ENCODE measurements at regions of chr17 and their contacts with region 1.

Region 1: GRCh38 chr17:78019367-78019975 is 61.0 kb downstream of the TNRC6C start:
- DNase-seq: peak; percentile 46
- H3K4me3 Mint-ChIP-seq: no peak overlapping the region
- H3K27ac Mint-ChIP-seq: no peak overlapping the region
- H3K4me1 Mint-ChIP-seq: peaks cover 5% of the 10 kb centered on the region
- H3K27me3 Mint-ChIP-seq: no peaks in the 10 kb centered on the region
- CTCF ChIP-seq: peak; percentile 32

Region 2: GRCh38 chr17:78040440-78041385 is 21.2 kb after region 1 on chr17:
- CTCF ChIA-PET with region 1: interaction called, 8 read pairs
- POLR2A ChIA-PET with region 1: interaction called, 18 read pairs
- intact Hi-C with region 1: no loop called
- DNase-seq: peak; percentile 77
- H3K4me3 Mint-ChIP-seq: peak overlapping the region; percentile 80
- H3K27ac Mint-ChIP-seq: peak overlapping the region; percentile 97
- H3K4me1 Mint-ChIP-seq: peaks cover 19% of the 10 kb centered on the region
- H3K27me3 Mint-ChIP-seq: no peaks in the 10 kb centered on the region
- CTCF ChIP-seq: no peak

Region 3: DNA sequence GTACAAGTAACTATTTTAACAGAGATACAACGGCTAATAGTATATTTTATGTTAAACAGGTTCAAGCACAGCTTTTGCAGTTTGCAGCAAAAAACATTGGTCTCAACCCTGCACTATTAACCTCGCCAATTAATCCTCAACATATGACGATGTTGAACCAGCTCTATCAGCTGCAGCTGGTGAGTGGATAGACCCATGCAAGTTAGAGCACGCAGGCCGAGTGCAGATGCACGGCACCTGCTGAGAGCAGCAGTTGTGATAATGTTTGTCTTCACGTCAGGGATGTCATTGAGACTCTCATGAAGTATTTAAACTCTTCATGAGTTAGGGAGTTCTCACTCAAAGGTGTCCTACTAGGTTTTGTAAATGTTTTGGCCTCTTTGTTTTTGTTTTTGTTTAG is 63.5 kb after region 1 on chr17:
- CTCF ChIA-PET with region 1: interaction called, 4 read pairs
- POLR2A ChIA-PET with region 1: no interaction called
- intact Hi-C with region 1: loop called (anchors 2 kb)
- DNase-seq: no peak
- H3K4me3 Mint-ChIP-seq: no peak overlapping the region
- H3K27ac Mint-ChIP-seq: no peak overlapping the region
- H3K4me1 Mint-ChIP-seq: no peaks in the 10 kb centered on the region
- H3K27me3 Mint-ChIP-seq: no peaks in the 10 kb centered on the region
- CTCF ChIP-seq: no peak

Measured in MCF 10A (cell line).